ENCODE measurements at regions of chr20 and their contacts with region 1.

Region 1: DNA sequence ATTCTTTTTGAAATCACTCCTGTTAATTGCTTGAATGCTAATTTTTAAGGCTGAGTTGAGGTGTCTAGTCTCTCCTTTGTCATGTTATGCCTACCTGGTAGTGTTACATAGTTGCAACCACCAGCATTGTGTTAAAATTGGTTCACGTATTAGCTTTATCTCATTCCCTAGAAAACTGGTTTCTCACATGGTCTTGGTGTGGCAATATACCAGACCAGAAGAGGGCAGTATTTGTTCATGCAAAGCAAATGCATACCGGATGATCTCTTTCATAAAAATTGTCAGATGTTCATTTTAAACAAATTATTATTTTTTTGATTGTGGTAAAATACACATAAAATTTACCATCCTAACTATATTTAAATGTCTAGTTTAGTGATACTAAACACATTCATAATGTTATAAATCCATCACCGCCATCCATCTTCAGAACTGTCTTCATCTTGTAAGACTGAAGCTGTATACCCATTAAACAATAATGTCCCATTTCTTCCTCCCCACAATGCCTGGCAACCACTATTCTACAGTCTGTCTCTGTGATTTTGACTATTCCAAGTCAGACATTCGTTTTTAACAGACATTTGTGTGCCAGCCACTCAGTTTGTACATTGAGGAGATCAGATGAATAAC is 92.8 kb downstream of the ATRN start:
- DNase-seq: peak; percentile 39
- H3K4me3 ChIP-seq: no peak overlapping the region
- H3K27ac ChIP-seq: no peak overlapping the region
- H3K4me1 ChIP-seq: peaks cover 5% of the 10 kb centered on the region
- H3K27me3 ChIP-seq: no peaks in the 10 kb centered on the region
- CTCF ChIP-seq: peak; percentile 76 to 80

Region 2: DNA sequence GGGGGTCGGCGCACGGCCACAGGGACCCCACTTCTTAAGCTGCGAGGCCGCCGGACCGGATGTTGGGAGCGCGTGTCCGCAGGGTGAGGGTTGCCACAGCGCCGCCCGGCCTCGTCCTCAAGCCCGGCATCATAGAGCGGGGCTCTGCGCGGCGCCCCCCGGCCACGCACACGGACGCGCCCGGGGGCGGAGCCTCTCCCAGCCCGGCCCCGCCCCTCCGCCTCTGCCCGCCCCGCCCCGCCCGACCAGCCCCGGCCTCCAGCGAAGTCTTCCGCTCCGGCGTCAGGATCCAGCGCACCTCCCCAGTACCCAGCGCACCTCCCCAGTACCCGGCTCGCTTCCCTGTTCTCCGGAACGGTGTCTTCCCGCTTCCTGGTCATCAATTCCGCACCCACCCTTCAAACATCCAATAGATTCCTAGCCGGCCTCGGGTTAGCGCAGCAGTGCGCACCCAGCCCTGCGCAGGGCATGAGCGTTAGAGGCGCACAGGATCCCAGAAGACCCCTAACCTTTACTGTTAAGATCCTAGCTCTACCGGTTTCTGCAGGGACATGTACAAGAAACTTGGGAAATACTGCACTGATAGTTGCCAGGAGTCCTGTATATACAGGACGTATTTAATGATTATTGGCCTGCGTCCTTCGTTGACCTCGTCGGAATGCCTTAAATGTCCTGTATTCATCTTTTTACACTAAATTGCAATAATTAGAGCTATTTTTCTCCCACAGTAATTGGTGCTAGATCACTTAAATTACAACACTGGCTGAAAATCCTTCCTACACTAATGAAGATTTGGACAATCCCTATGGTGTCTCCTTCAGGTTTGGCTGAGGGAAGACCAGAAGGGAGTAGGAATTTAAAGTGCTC is 155.7 kb before region 1 on chr20:
- CTCF ChIA-PET with region 1: interaction called, 11 read pairs
- dilution Hi-C with region 1: no loop called
- in situ Hi-C with region 1: no loop called
- intact Hi-C with region 1: loop called (anchors 1 kb)
- DNase-seq: peak; percentile 90
- H3K4me3 ChIP-seq: peak overlapping the region; percentile 70 to 87 (median 72)
- H3K27ac ChIP-seq: peak overlapping the region; percentile 52
- H3K4me1 ChIP-seq: peaks cover 18% of the 10 kb centered on the region
- H3K27me3 ChIP-seq: no peaks in the 10 kb centered on the region
- CTCF ChIP-seq: no peak

Region 3: GRCh38 chr20:3710703-3711483 is 147.2 kb after region 1 on chr20:
- CTCF ChIA-PET with region 1: no interaction called
- dilution Hi-C with region 1: no loop called
- in situ Hi-C with region 1: no loop called
- intact Hi-C with region 1: loop called (anchors 5 kb)
- DNase-seq: peak; percentile 21
- H3K4me3 ChIP-seq: no peak overlapping the region
- H3K27ac ChIP-seq: no peak overlapping the region
- H3K4me1 ChIP-seq: no peaks in the 10 kb centered on the region
- H3K27me3 ChIP-seq: no peaks in the 10 kb centered on the region
- CTCF ChIP-seq: peak; percentile 76 to 89

Region 4: GRCh38 chr20:3871550-3872297 is 308.1 kb after region 1 on chr20:
- CTCF ChIA-PET with region 1: no interaction called
- dilution Hi-C with region 1: no loop called
- in situ Hi-C with region 1: no loop called
- intact Hi-C with region 1: no loop called
- DNase-seq: peak; percentile 75
- H3K4me3 ChIP-seq: no peak overlapping the region
- H3K27ac ChIP-seq: peak overlapping the region; percentile 41
- H3K4me1 ChIP-seq: peaks cover 4% of the 10 kb centered on the region
- H3K27me3 ChIP-seq: no peaks in the 10 kb centered on the region
- CTCF ChIP-seq: no peak

Region 5: GRCh38 chr20:4320291-4320690 is 756.6 kb after region 1 on chr20:
- CTCF ChIA-PET with region 1: interaction called, 25 read pairs
- dilution Hi-C with region 1: no loop called
- in situ Hi-C with region 1: no loop called
- intact Hi-C with region 1: no loop called
- DNase-seq: no peak
- H3K4me3 ChIP-seq: no peak overlapping the region
- H3K27ac ChIP-seq: no peak overlapping the region
- H3K4me1 ChIP-seq: no peaks in the 10 kb centered on the region
- H3K27me3 ChIP-seq: no peaks in the 10 kb centered on the region
- CTCF ChIP-seq: no peak